ENCODE measurements at regions of chr19 and their contacts with region 1.

Region 1: GRCh38 chr19:42244347-42245220 is 2.2 kb upstream of the GSK3A start:
- DNase-seq: peak; percentile 85
- H3K4me3 ChIP-seq: peak overlapping the region; percentile 79
- H3K27ac ChIP-seq: peak overlapping the region; percentile 65
- H3K27me3 ChIP-seq: no peaks in the 10 kb centered on the region
- CTCF ChIP-seq: peak; percentile 71

Region 2: GRCh38 chr19:42184401-42184861 is 60.2 kb before region 1 on chr19:
- CTCF ChIA-PET with region 1: no interaction called
- POLR2A ChIA-PET with region 1: no interaction called
- DNase-seq: peak; percentile 44
- H3K4me3 ChIP-seq: no peak overlapping the region
- H3K27ac ChIP-seq: no peak overlapping the region
- H3K27me3 ChIP-seq: peaks cover 23% of the 10 kb centered on the region
- CTCF ChIP-seq: peak; percentile 92

Region 3: DNA sequence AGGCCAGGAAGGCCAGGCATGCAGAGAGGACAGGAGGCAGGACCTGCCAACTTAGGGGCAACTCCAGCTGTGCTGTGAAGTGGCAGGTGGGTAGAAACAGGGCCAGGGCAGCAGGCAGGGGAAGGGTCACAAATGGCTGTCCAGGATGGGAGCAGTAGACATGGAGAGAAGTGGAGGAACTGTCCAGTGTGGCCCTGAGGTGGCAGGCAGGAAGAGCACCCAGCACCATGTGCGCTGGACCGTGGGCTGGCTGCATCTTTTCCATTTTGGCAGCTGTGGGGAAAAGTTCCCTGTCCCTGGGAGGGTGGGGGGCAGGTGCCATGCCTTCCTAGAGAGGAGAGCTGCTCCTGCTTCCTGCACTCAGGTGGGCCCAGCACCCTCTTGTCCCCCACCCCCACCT is 40.9 kb before region 1 on chr19:
- CTCF ChIA-PET with region 1: no interaction called
- POLR2A ChIA-PET with region 1: no interaction called
- DNase-seq: no peak
- H3K4me3 ChIP-seq: no peak overlapping the region
- H3K27ac ChIP-seq: no peak overlapping the region
- H3K27me3 ChIP-seq: no peaks in the 10 kb centered on the region
- CTCF ChIP-seq: no peak

Region 4: GRCh38 chr19:42268704-42269477 is 24.3 kb after region 1 on chr19 and contains the start of gene CIC:
- CTCF ChIA-PET with region 1: no interaction called
- POLR2A ChIA-PET with region 1: interaction called, 10 read pairs
- DNase-seq: peak; percentile 100
- H3K4me3 ChIP-seq: peak within 1 kb of the TSS; percentile 94
- H3K27ac ChIP-seq: peak within 1 kb of the TSS; percentile 98
- H3K27me3 ChIP-seq: no peaks in the 10 kb centered on the region
- CTCF ChIP-seq: no peak
- polyA plus RNA-seq, gene CIC: 2.9 and 4.2 TPM in 2 replicates

Region 5: DNA sequence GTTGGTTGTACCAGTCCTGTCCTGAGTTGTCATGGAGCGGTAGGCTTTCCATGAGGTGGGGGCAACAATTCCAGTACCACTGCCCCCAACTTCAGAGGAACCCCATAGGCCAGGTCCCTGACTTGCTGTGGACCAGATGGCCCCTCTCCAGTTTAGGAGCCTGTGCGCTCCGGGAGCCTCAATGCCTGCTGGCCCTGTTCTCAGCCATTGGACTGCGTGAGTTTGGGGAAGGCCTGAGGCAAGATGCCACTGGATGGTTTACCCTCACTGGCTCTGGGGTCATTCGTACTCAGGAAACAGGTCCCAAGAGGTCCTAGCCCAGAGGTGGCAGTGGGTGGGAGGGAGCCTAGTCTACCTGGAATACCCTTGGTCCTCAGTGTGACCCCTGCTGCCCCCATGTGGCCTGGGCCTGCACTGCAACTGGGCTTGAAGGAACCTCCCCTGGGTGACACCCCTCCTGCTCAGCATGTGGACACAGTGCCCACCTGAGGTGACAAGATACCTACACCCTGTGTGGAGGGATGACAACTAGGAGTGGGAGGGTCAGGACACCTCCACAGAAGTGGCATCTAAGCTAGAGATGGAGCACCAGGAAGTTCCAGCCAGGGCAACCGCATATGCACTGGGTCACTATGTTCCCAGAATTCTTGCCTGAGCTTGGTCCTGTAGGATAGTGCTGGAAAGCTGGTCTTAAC is 51.4 kb after region 1 on chr19:
- CTCF ChIA-PET with region 1: interaction called, 15 read pairs
- POLR2A ChIA-PET with region 1: interaction called, 3 read pairs
- DNase-seq: no peak
- H3K4me3 ChIP-seq: no peak overlapping the region
- H3K27ac ChIP-seq: peak overlapping the region; percentile 3
- H3K27me3 ChIP-seq: no peaks in the 10 kb centered on the region
- CTCF ChIP-seq: peak; percentile 93

Region 6: DNA sequence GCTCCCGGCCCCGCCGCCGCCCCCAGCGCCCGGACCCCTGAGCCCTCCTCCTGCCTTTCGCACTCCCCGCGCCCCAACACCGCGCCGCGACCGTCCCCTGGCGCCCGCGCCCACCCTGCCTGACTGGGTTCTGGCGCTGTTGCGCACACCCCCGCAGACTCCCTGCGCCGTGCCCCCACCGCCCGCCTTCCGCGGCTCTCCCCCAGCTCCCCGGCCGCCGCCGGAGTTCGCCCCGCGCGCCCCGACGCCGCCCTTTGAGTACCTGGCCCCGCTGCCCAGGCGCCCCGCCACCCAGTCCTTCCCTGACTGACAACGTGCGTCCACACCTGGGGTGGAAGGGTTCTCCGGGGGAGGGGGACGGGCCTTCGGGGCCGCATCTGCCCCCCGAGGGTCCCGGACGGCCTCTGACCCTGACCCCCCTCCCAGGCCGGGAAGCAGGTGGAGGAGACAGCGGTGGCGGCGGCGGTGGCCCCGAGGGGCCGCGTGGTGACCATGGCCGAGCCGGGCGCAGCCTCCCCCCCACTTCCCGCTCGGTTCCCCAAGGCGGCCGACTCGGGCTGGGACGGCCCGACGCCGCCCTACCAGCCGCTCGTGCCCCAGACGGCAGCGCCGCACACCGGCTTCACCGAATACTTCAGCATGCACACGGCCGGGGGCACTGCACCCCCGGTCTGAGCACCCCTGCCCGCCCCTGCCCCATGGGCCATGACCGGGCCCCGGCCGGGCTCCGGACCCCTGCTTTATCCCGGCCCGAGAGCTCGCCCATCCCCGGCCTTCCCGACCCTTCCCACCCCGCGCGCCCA is 79.5 kb after region 1 on chr19:
- CTCF ChIA-PET with region 1: interaction called, 16 read pairs
- POLR2A ChIA-PET with region 1: no interaction called
- DNase-seq: no peak
- H3K4me3 ChIP-seq: no peak overlapping the region
- H3K27ac ChIP-seq: no peak overlapping the region
- H3K27me3 ChIP-seq: peaks cover 21% of the 10 kb centered on the region
- CTCF ChIP-seq: no peak